BJ (cell line): ENCODE measurements at regions of chr13 and their contacts with region 1.

Region 1: GRCh38 chr13:20118268-20119140 is 42.3 kb downstream of the GJA3 start:
- DNase-seq: no peak
- H3K4me3 ChIP-seq: peak overlapping the region; percentile 60
- H3K27me3 ChIP-seq: no peaks in the 10 kb centered on the region
- CTCF ChIP-seq: no peak

Region 2: DNA sequence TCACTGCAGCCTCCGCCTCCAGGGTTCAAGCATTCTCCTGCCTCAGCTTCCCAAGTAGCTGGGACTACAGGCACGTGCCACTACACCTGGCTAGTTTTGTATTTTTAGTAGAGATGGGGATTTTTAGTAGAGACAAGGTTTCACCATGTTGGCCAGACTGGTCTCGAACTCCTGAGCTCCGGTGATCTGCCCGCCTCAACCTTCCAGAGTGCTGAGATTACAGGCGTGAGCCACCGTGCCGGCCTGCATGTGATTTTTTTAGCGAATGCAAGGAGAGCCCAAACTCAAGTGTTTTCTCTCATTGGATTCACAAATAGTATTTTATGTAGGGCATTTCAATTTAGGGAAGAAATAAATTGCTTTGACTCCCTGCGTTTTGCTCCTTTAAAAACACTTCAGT is 155.6 kb before region 1 on chr13:
- CTCF ChIA-PET with region 1: no interaction called
- POLR2A ChIA-PET with region 1: interaction called, 12 read pairs
- DNase-seq: no peak
- H3K4me3 ChIP-seq: no peak overlapping the region
- H3K27me3 ChIP-seq: no peaks in the 10 kb centered on the region
- CTCF ChIP-seq: no peak

Region 3: DNA sequence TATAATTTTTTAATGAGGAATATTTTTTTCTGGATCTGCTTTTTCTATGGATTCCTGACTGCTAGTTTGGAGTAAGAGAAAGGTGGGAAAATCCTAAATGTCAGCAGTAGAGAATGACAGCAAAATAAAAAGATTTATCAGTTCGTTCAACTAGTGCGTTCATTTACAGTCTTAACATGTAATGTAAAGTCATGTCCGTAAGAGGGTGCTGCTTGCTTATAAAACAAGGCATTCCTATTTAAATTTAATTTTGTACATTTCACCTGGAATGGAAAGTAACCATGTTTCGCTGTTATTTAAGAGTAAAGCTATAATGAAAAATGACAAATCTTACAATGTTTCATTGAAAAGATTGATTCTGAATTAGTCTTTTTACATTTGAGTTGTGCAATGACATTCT is 83.4 kb before region 1 on chr13:
- CTCF ChIA-PET with region 1: no interaction called
- POLR2A ChIA-PET with region 1: no interaction called
- DNase-seq: no peak
- H3K4me3 ChIP-seq: no peak overlapping the region
- H3K27me3 ChIP-seq: no peaks in the 10 kb centered on the region
- CTCF ChIP-seq: no peak

Region 4: DNA sequence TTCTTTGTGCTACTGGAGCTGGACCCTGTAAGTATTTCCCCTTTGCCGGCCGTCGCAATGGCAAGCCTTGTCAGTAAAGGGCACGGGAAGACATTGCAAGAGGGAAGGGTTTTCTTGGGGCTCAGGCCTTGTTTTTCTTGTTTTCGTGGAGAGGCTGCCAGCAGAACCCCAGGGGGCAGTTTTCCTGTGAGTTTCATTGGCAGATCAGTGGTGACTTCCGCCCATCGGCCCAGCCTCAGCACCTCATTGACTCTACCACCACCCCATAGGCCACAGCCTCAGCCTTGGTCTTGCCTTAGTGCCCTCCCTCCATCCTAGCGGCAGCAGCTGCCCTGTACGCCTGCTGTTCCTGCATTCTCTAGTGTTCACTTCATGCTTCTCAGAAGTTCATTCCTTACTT is 19.2 kb before region 1 on chr13:
- CTCF ChIA-PET with region 1: no interaction called
- POLR2A ChIA-PET with region 1: no interaction called
- DNase-seq: no peak
- H3K4me3 ChIP-seq: no peak overlapping the region
- H3K27me3 ChIP-seq: peaks cover 16% of the 10 kb centered on the region
- CTCF ChIP-seq: no peak